ENCODE measurements at regions of chr2 and their contacts with region 1.

Region 1: DNA sequence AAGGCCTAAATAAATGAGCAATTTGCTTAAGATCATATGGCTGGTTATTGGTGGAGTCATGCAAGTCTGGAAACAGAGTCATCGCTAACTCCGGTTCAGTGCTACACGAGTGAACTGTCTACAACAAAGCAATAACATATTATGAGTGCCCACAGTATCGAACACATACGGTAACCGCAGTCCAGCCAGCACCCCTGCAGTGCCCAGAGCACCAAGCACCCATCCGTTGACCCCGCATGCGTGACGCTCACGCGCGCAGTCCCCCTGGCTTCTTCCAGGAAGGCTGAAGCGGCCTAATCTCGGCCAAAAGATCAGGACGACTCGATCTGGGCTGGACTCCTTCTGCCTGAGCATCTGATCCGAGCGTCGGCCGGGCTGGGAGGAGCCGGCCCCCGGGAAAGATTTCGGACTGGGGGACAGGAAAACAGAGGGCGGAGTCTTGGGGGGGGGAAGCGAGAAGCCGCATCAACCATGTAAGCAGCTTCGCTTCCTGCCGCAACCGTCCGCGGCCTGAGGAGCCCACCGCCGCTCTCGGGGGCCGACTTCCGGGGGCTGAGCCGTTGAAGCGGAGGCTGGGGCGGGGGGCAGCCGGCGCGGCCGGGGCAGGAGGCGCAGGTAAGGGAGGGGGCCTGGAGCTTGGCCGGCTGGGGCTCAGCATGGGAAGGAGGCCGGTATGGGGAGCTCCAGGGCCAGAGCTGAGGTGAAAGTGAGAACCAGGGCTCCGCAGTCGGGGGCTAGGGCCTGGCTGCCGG is at the start of gene PIKFYVE:
- DNase-seq: peak; percentile 96
- ATAC-seq: peak; percentile 91
- H3K4me3 ChIP-seq: peak within 1 kb of the TSS; percentile 90 to 91
- H3K27ac ChIP-seq: peak within 1 kb of the TSS; percentile 62
- H3K4me1 ChIP-seq: peaks cover 10 to 29% of the 10 kb centered on the region in 2 experiments
- H3K27me3 ChIP-seq: no peaks in the 10 kb centered on the region
- CTCF ChIP-seq: no peak
- POLR2A ChIP-seq: no peak
- RAD21 ChIP-seq: no peak
- total RNA-seq, gene PIKFYVE: 21.8 TPM

Region 2: GRCh38 chr2:207796585-207797350 is 469.2 kb before region 1 on chr2:
- CTCF ChIA-PET with region 1: no interaction called
- POLR2A ChIA-PET with region 1: no interaction called
- RAD21 ChIA-PET with region 1: no interaction called
- intact Hi-C with region 1: loop called (anchors 5 kb)
- DNase-seq: no peak
- ATAC-seq: no peak
- H3K4me3 ChIP-seq: no peak overlapping the region
- H3K27ac ChIP-seq: no peak overlapping the region
- H3K4me1 ChIP-seq: peaks cover 29 to 42% of the 10 kb centered on the region in 2 experiments
- H3K27me3 ChIP-seq: no peaks in the 10 kb centered on the region
- CTCF ChIP-seq: no peak
- POLR2A ChIP-seq: no peak
- RAD21 ChIP-seq: no peak; the same call in 1 of the 2 replicates

Region 3: DNA sequence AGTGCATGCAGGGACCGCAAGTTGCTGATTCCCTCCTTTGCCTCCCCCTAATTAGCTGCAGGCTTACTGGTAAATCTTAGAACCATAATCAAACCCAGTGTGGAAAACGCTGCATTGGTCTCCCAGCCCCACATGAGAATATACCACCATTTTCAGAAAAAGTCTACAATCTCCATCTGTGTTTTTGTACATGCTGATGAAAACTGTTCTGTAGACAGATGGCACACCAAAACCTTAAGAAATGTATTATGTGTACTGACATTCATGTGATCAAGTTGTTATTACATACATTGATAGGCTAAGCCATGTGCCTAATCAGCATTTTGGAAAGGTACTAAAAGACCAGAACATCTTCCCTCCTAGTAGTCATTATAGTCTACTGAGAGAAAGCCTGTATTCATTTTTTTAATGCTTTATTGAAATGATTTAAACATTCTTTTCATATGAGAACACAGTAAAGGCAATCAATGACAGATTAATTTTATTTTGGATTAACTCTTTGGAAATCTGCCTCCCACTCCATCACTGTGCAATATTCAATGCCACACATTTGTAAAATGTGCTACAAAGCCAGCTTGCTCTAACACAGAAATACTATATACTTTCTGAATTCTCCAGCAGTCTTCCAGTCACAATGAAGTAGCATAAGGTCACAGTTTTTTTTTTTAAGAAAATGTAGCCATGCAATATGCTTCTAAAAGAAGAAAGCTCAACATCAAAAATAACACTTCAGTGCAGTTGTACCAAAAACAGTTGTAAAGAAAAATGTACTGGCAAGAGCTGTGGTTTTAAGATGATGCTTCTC is 100.8 kb before region 1 on chr2:
- CTCF ChIA-PET with region 1: no interaction called
- POLR2A ChIA-PET with region 1: no interaction called
- RAD21 ChIA-PET with region 1: no interaction called
- intact Hi-C with region 1: no loop called
- DNase-seq: no peak
- ATAC-seq: no peak
- H3K4me3 ChIP-seq: no peak overlapping the region
- H3K27ac ChIP-seq: no peak overlapping the region
- H3K4me1 ChIP-seq: peaks cover 4 to 10% of the 10 kb centered on the region in 2 experiments; a peak in 2 of 4 replicates
- H3K27me3 ChIP-seq: no peaks in the 10 kb centered on the region
- CTCF ChIP-seq: no peak
- POLR2A ChIP-seq: no peak
- RAD21 ChIP-seq: no peak

Region 4: DNA sequence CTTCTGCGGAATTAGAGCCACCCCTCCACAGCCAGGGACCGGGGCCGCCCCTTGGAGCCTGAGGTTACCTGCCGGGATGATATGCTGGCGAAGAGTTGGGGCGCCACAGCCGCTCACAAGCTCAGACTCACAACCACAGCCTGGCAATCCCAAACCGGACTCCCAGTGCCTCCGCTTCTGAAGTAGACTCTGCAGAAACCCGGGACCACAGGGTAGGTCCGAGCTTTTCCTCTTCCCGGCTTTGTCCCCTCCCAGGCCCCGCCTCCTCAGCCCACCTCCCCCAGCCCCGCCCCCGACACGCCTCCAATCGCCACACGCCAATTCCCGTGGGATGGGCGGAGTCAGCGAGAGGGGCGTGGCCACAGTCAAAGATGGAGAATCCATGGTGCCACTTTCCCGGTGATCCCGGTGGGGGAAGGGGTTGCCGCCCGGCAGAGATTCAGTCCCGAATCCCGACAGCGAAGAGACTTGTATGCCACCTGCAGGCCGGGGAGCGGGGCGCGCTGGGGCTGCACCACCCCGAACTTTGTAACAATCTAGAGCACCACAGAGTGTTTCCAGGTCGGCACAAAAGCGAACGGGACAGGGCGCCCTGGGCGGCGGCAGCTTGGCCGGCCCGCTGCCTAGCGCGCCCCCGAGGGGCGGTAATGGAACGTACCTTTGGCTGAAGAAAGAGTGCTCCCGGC is 11.0 kb before region 1 on chr2 and contains the start of gene IDH1:
- CTCF ChIA-PET with region 1: interaction called, 7 read pairs
- POLR2A ChIA-PET with region 1: interaction called, 16 read pairs
- RAD21 ChIA-PET with region 1: no interaction called
- intact Hi-C with region 1: no loop called
- DNase-seq: peak; percentile 87
- ATAC-seq: peak; percentile 79
- H3K4me3 ChIP-seq: peak within 1 kb of the TSS; percentile 79 to 80
- H3K27ac ChIP-seq: peak within 1 kb of the TSS; percentile 73
- H3K4me1 ChIP-seq: peaks cover 10 to 20% of the 10 kb centered on the region in 2 experiments; a peak in 3 of 4 replicates
- H3K27me3 ChIP-seq: no peaks in the 10 kb centered on the region
- CTCF ChIP-seq: peak; percentile 60 to 64 (median 62); a peak in 5 of 6 replicates
- POLR2A ChIP-seq: no peak
- RAD21 ChIP-seq: peak; percentile 61
- total RNA-seq, gene IDH1: 91.2 TPM

Region 5: GRCh38 chr2:208363485-208363884 is 97.5 kb after region 1 on chr2:
- CTCF ChIA-PET with region 1: no interaction called
- POLR2A ChIA-PET with region 1: no interaction called
- RAD21 ChIA-PET with region 1: no interaction called
- intact Hi-C with region 1: no loop called
- DNase-seq: no peak
- ATAC-seq: peak; percentile 46; the same call in 1 of the 2 replicates
- H3K4me3 ChIP-seq: no peak overlapping the region
- H3K27ac ChIP-seq: no peak overlapping the region
- H3K4me1 ChIP-seq: 0 out of 4 replicates have a peak, but pooled peaks cover 0 to 3% of the 10 kb centered on the region in 2 experiments
- H3K27me3 ChIP-seq: no peaks in the 10 kb centered on the region
- CTCF ChIP-seq: no peak
- POLR2A ChIP-seq: no peak
- RAD21 ChIP-seq: no peak

Measured in HCT116 (cell line).